ENCODE measurements at regions of chr3 and their contacts with region 1.

Region 1: DNA sequence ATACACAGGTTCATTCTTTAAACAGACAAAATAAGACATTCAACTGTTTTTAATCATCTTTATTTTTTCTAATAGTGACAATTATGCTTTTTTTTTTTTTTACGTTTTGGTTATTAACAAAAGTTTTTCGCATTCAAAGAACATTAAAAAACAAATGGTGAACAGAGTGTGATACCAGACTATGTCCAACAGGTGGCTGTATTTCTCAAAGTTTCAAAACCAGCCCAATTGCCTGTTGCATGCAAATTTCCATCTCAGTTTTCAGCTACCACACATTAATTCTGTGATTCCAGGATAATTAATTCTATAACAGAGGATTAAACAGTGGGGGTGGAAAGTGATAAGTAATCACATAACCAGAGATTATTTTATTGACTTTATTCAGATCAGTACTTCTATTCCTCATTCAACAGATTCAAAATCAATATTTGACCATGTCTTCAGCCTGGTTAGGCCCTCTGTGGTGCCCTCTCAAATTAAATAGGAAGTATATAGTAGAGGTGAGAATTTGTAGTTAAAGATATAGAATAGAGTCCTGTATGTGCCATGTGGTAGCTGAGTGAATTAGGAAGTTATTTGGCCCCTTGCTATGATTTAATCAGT is 122.2 kb upstream of the DCBLD2 start:
- DNase-seq: no peak
- H3K4me3 ChIP-seq: no peak overlapping the region
- H3K27ac ChIP-seq: no peak overlapping the region
- H3K4me1 ChIP-seq: no peaks in the 10 kb centered on the region
- H3K27me3 ChIP-seq: no peaks in the 10 kb centered on the region
- CTCF ChIP-seq: peak in 2 of 3 experiments; percentile 47 to 53; a peak in 2 of 4 replicates
- EP300 ChIP-seq: no peak
- POLR2A ChIP-seq: no peak
- RAD21 ChIP-seq: peak; percentile 69 to 72

Region 2: DNA sequence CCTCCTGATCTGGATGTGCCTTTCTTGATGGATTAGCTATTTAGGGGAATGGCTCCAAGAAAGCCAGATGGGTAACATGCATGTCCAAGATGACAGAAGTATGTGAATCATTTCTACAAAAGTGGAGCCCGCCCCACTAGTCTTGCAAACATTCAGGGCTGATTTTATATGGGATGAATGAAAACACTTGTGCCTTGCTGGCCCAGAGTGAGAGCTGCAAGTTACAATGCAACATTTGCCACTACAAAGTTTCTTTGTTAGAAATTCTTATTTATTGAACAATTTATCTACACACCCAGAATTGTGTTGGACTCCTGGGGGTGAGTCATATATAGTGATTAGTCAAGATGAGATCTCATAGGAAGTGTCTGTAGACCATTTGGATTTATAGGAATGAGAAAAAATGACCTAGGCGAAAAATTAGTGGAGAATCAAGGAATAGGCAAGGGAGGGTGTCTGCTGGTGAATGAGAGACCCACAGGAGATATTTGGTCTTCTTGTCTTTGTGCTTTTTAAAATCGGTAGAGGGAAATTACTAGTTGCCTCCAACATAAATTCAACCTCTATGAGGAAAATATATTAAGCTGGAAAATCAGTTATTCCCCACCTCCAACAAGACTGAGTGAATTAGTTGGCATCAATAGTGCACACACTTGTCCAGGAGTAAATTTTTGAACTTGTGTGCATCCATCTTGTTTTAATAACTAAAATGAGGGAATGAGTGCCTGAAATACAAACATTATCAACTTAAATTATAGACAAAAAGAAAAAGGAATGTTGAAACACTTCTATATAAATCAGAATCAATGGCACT is 68.7 kb before region 1 on chr3:
- CTCF ChIA-PET with region 1: no interaction called
- POLR2A ChIA-PET with region 1: no interaction called
- DNase-seq: no peak
- H3K4me3 ChIP-seq: no peak overlapping the region
- H3K27ac ChIP-seq: no peak overlapping the region
- H3K4me1 ChIP-seq: no peaks in the 10 kb centered on the region
- H3K27me3 ChIP-seq: no peaks in the 10 kb centered on the region
- CTCF ChIP-seq: no peak
- EP300 ChIP-seq: no peak
- POLR2A ChIP-seq: no peak
- RAD21 ChIP-seq: no peak

Region 3: GRCh38 chr3:99013077-99013476 is 10.6 kb before region 1 on chr3:
- CTCF ChIA-PET with region 1: interaction called, 10 read pairs
- POLR2A ChIA-PET with region 1: no interaction called
- DNase-seq: no peak
- H3K4me3 ChIP-seq: no peak overlapping the region
- H3K27ac ChIP-seq: no peak overlapping the region
- H3K4me1 ChIP-seq: no peaks in the 10 kb centered on the region
- H3K27me3 ChIP-seq: no peaks in the 10 kb centered on the region
- CTCF ChIP-seq: no peak
- EP300 ChIP-seq: no peak
- POLR2A ChIP-seq: no peak
- RAD21 ChIP-seq: no peak

Region 4: GRCh38 chr3:99049164-99049563 is 25.5 kb after region 1 on chr3:
- CTCF ChIA-PET with region 1: no interaction called
- POLR2A ChIA-PET with region 1: no interaction called
- DNase-seq: no peak
- H3K4me3 ChIP-seq: no peak overlapping the region
- H3K27ac ChIP-seq: no peak overlapping the region
- H3K4me1 ChIP-seq: no peaks in the 10 kb centered on the region
- H3K27me3 ChIP-seq: no peaks in the 10 kb centered on the region
- CTCF ChIP-seq: no peak
- EP300 ChIP-seq: no peak
- POLR2A ChIP-seq: no peak
- RAD21 ChIP-seq: no peak